Calu3 (cell line): ENCODE measurements at regions of chr3 and their contacts with region 1.

Region 1: GRCh38 chr3:72447059-72447946 is 400.9 kb downstream of the SHQ1 start:
- DNase-seq: peak; percentile 95
- H3K4me3 Mint-ChIP-seq: peak overlapping the region; percentile 78
- H3K27ac Mint-ChIP-seq: peak overlapping the region; percentile 46
- H3K4me1 Mint-ChIP-seq: peaks cover 43% of the 10 kb centered on the region
- H3K27me3 Mint-ChIP-seq: no peaks in the 10 kb centered on the region
- CTCF ChIP-seq: no peak

Region 2: DNA sequence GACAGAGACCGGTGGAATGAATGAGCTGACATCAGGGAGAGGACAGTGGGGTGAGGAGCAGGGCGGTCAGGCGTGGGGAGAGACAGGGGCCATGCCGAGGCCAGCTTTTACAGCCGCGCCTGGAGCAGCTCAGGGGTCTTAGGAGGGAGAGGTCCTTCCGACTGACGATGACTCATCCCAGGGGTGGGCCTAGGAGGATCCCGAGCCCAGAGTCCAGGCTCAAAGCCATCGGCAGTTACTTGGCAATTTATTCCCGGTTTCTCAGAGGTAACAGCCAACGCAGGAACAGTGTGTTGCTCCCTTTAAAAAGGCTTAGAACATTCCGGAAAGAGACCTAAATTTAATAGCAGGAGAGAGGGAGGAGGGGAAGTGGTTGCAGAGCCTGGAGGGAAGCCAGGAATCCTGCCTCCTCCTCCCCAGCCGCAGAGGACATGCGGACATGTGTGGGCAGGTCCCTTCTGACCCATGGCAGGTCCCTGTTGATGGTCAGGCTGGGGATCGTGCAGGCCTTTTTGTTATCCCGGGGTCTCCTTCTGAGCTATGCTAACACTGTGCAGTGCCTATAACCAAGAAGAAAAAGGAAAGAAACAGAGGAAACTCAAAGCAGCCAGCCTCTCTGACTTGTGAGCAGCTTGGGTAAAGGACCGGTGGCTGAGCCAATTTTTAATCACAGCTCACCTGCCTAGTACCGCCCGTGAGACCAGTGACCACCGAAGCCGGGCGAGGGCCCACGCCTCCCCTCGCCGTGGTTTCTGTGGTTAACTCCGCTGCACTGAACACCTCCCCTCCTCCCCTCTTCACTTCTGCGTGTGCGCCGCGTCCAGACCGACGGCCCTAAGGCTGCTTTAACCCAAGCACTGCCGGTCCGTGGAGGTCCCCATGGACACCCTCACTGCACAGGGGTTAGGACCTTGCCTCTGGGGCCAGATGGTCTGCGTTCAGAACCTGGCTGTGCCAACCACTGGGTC is 269.9 kb before region 1 on chr3:
- CTCF ChIA-PET with region 1: no interaction called
- intact Hi-C with region 1: no loop called
- DNase-seq: no peak
- H3K4me3 Mint-ChIP-seq: no peak overlapping the region
- H3K27ac Mint-ChIP-seq: no peak overlapping the region
- H3K4me1 Mint-ChIP-seq: no peaks in the 10 kb centered on the region
- H3K27me3 Mint-ChIP-seq: peaks cover 64% of the 10 kb centered on the region
- CTCF ChIP-seq: no peak

Region 3: DNA sequence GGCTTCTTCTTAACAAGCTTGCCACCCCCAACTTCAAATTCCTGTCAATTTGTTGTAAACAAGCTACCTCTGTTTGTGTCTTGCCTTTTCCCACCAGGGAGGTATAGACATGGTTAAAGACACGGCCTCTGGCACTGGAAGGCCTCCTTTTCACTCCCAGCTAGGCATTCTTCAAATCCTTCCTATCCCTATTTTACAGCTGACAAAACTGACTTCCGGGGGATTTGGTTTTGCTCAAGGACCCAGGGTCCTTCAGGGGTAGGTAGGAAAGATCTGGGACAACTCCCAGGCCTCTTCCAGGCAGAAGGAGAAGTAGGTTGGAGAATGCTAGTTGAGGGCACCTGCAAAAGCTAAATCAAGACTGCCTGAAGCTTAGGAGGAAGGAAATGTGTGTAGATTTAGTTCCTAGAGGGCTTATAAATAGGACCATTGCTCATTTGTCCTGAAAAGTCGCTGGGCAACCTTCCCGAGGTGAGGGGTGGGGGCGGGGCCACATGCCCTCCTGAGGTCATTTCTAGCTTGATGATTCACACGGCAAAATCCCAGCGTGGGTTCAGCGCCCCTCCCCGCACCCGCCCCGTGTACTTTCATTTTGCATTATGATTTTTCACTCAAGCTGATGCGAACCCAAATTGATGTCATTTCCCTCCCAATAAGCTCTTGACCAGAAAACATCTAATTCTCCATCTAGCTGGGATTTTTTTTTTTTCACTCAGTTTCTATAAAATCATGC is 35.5 kb after region 1 on chr3:
- CTCF ChIA-PET with region 1: no interaction called
- intact Hi-C with region 1: loop called (anchors 5 kb)
- DNase-seq: peak; percentile 48
- H3K4me3 Mint-ChIP-seq: peak overlapping the region; percentile 53
- H3K27ac Mint-ChIP-seq: peak overlapping the region; percentile 95
- H3K4me1 Mint-ChIP-seq: peaks cover 31% of the 10 kb centered on the region
- H3K27me3 Mint-ChIP-seq: no peaks in the 10 kb centered on the region
- CTCF ChIP-seq: no peak

Region 4: DNA sequence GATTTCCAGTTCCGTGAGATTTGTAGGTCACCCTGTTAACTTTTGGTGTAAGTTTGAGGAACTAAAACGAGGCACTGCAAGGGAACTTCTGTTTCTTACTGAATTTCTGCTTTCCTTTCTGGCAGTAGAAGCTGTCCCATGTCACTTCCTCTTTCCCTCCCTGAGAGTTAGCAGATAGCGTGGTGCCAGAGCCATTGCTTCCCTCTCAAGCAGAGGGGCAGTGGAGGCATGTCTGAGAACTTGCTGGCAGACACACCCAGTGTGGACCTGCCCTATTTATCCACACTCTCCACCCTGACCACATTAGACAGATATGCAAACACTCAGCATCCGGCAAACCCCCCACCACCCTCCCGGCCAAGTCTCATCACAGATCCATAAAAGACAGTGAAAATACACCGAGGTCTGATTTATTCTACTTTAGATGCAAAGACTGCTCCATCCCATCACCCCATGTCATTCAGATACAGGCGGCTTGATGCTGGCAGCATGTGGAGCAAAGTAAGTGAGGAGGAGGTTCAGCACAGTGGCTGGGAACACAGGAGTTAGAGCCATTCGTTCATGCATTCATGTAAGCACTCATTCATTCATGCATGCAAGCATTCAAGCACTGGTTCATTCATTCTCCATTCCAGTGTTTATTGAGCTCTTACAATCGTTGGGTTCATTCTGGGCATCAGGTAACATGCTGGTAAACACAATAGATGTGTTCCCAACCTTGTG is 76.3 kb after region 1 on chr3:
- CTCF ChIA-PET with region 1: no interaction called
- intact Hi-C with region 1: loop called (anchors 5 kb)
- DNase-seq: no peak
- H3K4me3 Mint-ChIP-seq: no peak overlapping the region
- H3K27ac Mint-ChIP-seq: no peak overlapping the region
- H3K4me1 Mint-ChIP-seq: peaks cover 29% of the 10 kb centered on the region
- H3K27me3 Mint-ChIP-seq: no peaks in the 10 kb centered on the region
- CTCF ChIP-seq: no peak